ENCODE measurements at regions of chr11 and their contacts with region 1.

Region 1: DNA sequence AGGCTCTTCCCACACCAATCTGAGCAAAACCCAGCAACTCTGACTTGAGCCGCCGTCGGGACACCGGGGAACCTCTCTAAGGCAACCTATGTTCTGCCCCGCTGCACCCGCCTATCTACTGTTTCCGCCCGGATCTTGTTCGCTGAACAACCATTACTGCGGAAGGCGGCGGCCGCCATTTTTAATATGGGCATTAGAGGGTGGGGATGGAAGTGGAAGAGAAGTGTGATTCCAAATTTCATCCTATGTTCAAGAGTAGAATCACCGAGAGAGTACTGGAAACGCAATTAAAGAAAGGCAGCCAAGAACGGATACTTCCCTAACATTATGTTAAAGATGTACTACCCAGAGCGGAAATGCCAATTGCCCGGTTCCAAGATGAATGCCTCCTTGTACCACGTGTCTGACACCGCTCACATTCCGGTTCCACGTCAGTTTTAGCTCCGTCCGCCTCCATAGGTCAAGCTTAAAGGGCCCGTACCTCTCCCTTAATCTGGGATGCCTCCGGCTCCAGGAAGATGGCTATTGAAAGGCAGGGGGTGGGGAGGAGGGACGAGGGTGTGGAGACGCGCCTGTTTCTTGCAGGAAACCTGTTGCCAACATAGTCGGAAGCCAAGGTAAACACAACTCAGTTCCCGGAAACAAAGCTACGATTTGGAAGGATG is at the start of gene DPAGT1:
- DNase-seq: peak; percentile 64
- ATAC-seq: peak; percentile 87
- H3K4me3 Mint-ChIP-seq: peak within 1 kb of the TSS; percentile 96
- H3K27ac Mint-ChIP-seq: peak within 1 kb of the TSS; percentile 96
- H3K4me1 Mint-ChIP-seq: peaks cover 58% of the 10 kb centered on the region
- H3K27me3 Mint-ChIP-seq: no peaks in the 10 kb centered on the region
- CTCF ChIP-seq: no peak
- total RNA-seq, gene DPAGT1: 31.0 and 33.1 TPM in 2 replicates

Region 2: DNA sequence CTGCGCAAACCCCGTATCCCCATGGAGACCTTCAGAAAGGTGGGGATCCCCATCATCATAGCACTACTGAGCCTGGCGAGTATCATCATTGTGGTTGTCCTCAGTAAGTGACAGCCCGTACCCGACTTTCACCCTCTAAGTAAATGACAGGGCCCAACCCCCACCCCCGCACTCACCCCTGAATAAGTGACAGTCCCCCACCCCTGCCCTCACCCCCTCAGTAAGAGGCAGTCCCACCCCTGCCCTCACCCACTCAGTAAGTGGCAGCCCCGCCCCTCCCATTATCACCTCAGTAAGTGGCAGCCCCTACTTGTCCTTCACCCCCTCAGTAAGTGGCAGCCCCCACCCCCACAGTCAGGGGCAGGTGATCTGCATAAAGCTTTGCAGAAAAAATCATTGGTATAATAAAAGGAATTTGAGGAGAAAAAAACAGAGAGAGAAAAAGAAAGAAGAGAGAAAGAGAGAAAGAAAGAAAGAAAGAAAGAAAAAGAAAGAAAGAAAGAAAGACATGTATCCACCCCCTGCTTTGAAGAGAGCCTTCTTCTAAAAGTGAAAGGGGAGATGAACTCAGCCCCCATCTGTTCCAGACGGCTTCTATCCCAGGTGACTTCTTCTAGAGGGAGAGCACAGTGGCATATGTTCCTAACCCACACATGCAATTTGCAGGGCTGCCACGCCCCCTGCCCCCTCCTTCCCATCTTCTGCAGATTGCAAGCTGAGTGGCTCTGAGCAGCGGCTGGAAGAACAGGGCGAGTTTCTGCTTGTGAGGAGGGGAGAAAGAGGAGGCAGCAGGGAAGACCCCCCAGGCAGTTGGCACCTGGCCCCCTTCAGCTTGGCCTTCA is 1002.7 kb before region 1 on chr11:
- CTCF ChIA-PET with region 1: no interaction called
- POLR2A ChIA-PET with region 1: no interaction called
- intact Hi-C with region 1: no loop called
- DNase-seq: no peak
- ATAC-seq: no peak
- H3K4me3 Mint-ChIP-seq: no peak overlapping the region
- H3K27ac Mint-ChIP-seq: no peak overlapping the region
- H3K4me1 Mint-ChIP-seq: no peaks in the 10 kb centered on the region
- H3K27me3 Mint-ChIP-seq: peaks cover 10% of the 10 kb centered on the region
- CTCF ChIP-seq: no peak

Region 3: GRCh38 chr11:119018074-119018938 is 83.6 kb before region 1 on chr11 and contains the starts of genes RPS25 and TRAPPC4:
- CTCF ChIA-PET with region 1: no interaction called
- POLR2A ChIA-PET with region 1: interaction called, 18 read pairs
- intact Hi-C with region 1: loop called (anchors 1 kb)
- DNase-seq: peak; percentile 90
- ATAC-seq: peak; percentile 87
- H3K4me3 Mint-ChIP-seq: peak within 1 kb of the TSS; percentile 99
- H3K27ac Mint-ChIP-seq: peak within 1 kb of the TSS; percentile 100
- H3K4me1 Mint-ChIP-seq: peaks cover 54% of the 10 kb centered on the region
- H3K27me3 Mint-ChIP-seq: no peaks in the 10 kb centered on the region
- CTCF ChIP-seq: no peak
- total RNA-seq, gene RPS25: 2,191 and 2,534 TPM in 2 replicates
- total RNA-seq, gene TRAPPC4: 56.8 and 60.1 TPM in 2 replicates

Region 4: GRCh38 chr11:119057000-119057769 is 44.7 kb before region 1 on chr11 and contains the start of gene HYOU1:
- CTCF ChIA-PET with region 1: interaction called, 3 read pairs
- POLR2A ChIA-PET with region 1: interaction called, 6 read pairs
- intact Hi-C with region 1: loop called (anchors 1 kb)
- DNase-seq: peak; percentile 97
- ATAC-seq: peak; percentile 94
- H3K4me3 Mint-ChIP-seq: peak within 1 kb of the TSS; percentile 96
- H3K27ac Mint-ChIP-seq: peak within 1 kb of the TSS; percentile 95
- H3K4me1 Mint-ChIP-seq: peaks cover 40% of the 10 kb centered on the region
- H3K27me3 Mint-ChIP-seq: no peaks in the 10 kb centered on the region
- CTCF ChIP-seq: no peak
- total RNA-seq, gene HYOU1: 120 and 122 TPM in 2 replicates

Region 5: DNA sequence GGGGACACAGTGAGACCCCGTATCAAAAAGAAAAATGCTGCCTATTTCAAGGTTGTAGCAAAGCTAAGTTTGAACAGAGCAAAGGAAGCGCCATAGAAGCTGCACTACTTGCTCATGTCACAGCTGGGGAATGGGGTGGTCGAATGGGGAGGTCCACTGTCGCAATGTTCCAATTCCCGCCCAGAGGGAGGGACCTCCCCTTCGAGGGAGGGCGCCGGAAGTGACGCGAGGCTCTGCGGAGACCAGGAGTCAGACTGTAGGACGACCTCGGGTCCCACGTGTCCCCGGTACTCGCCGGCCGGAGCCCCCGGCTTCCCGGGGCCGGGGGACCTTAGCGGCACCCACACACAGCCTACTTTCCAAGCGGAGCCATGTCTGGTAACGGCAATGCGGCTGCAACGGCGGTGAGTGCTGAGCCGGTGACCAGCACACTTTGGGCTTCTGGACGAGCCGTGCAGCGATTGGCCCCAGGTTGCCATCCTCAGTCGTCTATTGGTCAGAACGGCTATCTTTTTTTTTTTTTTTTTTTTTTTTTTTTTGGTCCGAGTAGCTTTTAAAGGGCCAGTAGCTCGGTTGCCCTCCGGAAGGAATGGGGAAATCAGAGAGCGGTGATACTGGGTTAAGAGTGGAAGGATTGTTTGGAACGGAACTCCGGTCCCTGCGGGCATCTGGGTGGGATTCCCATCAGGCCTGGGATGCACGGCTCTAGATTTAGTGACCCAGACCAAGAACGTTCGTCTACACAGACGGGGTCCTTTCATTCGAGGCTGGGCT is 17.0 kb before region 1 on chr11 and contains the start of gene HMBS:
- CTCF ChIA-PET with region 1: no interaction called
- POLR2A ChIA-PET with region 1: interaction called, 31 read pairs
- intact Hi-C with region 1: loop called (anchors 2 kb)
- DNase-seq: peak; percentile 92
- ATAC-seq: peak; percentile 90
- H3K4me3 Mint-ChIP-seq: peak within 1 kb of the TSS; percentile 95
- H3K27ac Mint-ChIP-seq: peak within 1 kb of the TSS; percentile 93
- H3K4me1 Mint-ChIP-seq: peaks cover 12% of the 10 kb centered on the region
- H3K27me3 Mint-ChIP-seq: no peaks in the 10 kb centered on the region
- CTCF ChIP-seq: no peak
- total RNA-seq, gene HMBS: 17.5 and 26.9 TPM in 2 replicates

Region 6: GRCh38 chr11:119791701-119792151 is 689.8 kb after region 1 on chr11:
- CTCF ChIA-PET with region 1: no interaction called
- POLR2A ChIA-PET with region 1: no interaction called
- intact Hi-C with region 1: no loop called
- DNase-seq: no peak
- ATAC-seq: no peak
- H3K4me3 Mint-ChIP-seq: no peak overlapping the region
- H3K27ac Mint-ChIP-seq: no peak overlapping the region
- H3K4me1 Mint-ChIP-seq: no peaks in the 10 kb centered on the region
- H3K27me3 Mint-ChIP-seq: peaks cover 19% of the 10 kb centered on the region
- CTCF ChIP-seq: no peak